H1 (cell line): ENCODE measurements at regions of chr11 and their contacts with region 1.

Region 1: GRCh38 chr11:45899448-45900173 is 7.5 kb downstream of the FREY1 start:
- DNase-seq: peak; percentile 72 to 90
- H3K4me3 ChIP-seq: peak overlapping the region; percentile 50 to 66 (median 59); a peak in 7 of 8 replicates
- H3K27ac ChIP-seq: peak overlapping the region; percentile 81; the same call in 1 of the 2 replicates
- H3K4me1 ChIP-seq: peaks cover 0 to 28% (median 19%) of the 10 kb centered on the region in 4 experiments; a peak in 5 of 7 replicates
- H3K27me3 ChIP-seq: peaks cover 0 to 5% (median 2%) of the 10 kb centered on the region in 4 experiments; a peak in 1 of 7 replicates
- CTCF ChIP-seq: no peak
- EP300 ChIP-seq: peak in 1 of 2 experiments; percentile 98; a peak in 1 of 3 replicates
- POLR2A ChIP-seq: no peak
- RAD21 ChIP-seq: peak in 1 of 2 experiments; percentile 26; a peak in 2 of 4 replicates

Region 2: DNA sequence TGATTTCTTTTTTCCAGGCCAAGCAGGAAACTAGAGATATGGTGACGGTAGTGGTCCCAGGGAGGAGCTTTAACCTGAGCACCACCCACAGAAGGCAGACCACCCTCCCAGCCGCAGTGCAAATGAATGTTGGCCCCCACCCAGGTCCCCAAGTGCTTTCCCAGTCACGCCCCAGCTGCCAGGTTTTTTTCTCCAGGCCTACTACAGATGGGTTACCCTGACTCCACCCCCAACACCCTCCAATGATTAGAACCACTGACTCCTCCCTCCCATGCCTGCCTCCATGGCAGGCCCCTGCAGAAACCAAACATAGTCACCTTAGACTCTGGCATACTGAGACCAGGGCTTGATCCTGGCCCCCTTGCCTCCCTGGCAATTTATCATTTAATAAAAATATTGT is 175.5 kb before region 1 on chr11:
- CTCF ChIA-PET with region 1: no interaction called
- POLR2A ChIA-PET with region 1: no interaction called
- DNase-seq: no peak
- H3K4me3 ChIP-seq: no peak overlapping the region
- H3K27ac ChIP-seq: no peak overlapping the region
- H3K4me1 ChIP-seq: peaks cover 4 to 14% (median 10%) of the 10 kb centered on the region in 4 experiments; a peak in 6 of 7 replicates
- H3K27me3 ChIP-seq: no peaks in the 10 kb centered on the region; a peak in 1 of 7 replicates
- CTCF ChIP-seq: no peak
- EP300 ChIP-seq: no peak
- POLR2A ChIP-seq: no peak
- RAD21 ChIP-seq: no peak

Region 3: DNA sequence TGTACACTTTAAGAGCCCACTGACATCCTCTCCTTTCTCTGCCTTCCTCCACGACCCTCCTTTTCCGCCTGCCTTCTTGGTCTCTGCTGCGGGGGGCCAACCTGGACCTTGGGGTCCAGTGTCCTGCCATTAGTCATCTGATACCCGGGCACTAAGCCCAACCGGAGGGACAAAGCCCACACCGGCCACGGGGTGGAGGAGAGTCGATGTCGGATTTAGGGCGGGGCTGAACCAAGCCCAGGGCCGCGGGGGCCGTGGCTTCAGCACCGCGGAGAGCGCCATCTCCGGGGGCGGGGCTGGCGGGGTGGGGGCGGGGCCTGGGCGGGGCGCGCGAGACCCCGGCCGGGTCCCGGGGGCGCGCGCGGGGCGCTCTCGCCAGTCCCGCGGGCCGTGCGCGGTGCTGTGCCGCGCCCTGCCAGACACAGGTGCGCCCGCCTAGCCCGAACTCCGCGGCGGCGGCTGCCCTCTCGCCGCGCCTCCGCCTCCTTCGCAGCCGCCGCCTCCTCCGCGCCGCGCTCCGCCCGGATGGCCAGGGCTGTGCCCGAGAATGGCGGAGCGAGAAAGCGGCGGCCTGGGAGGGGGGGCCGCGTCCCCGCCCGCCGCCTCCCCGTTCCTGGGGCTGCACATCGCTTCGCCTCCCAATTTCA is 14.2 kb before region 1 on chr11 and contains the start of gene MAPK8IP1:
- CTCF ChIA-PET with region 1: interaction called, 8 read pairs
- POLR2A ChIA-PET with region 1: interaction called, 11 read pairs
- DNase-seq: peak; percentile 17 to 82
- H3K4me3 ChIP-seq: peak within 1 kb of the TSS; percentile 58 to 83 (median 71)
- H3K27ac ChIP-seq: no peak within 1 kb of the TSS
- H3K4me1 ChIP-seq: peaks cover 0 to 10% (median 5%) of the 10 kb centered on the region in 4 experiments; a peak in 5 of 7 replicates
- H3K27me3 ChIP-seq: no peaks in the 10 kb centered on the region; a peak in 2 of 7 replicates
- CTCF ChIP-seq: no peak; a peak in 1 of 4 replicates
- EP300 ChIP-seq: no peak
- POLR2A ChIP-seq: no peak
- RAD21 ChIP-seq: no peak; a peak in 1 of 4 replicates
- total RNA-seq, gene MAPK8IP1: 40.1 and 41.7 TPM in 2 replicates